ENCODE measurements at regions of chr6 and their contacts with region 1.

Region 1: DNA sequence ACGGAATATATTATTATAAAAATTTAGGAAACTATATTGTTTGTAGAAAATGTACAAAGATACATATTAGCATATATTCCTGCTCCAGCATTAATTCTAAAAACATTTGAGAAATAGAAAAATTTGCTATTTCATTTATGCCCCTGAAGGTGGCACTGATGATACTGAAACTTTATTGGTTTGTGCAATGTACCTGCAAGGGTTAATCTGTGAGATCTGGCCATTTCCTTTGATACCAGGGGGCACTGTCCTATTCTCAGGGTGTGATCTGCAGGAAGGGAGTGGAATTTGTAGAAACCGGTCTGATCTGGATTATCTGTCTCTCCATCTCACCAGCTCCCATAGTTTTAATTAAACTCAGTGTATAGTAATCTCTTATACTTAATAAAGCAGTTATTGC is 625.1 kb upstream of the IMPG1 start:
- DNase-seq: no peak
- H3K4me3 ChIP-seq: no peak overlapping the region
- H3K27ac ChIP-seq: no peak overlapping the region
- H3K4me1 ChIP-seq: no peaks in the 10 kb centered on the region
- H3K27me3 ChIP-seq: no peaks in the 10 kb centered on the region
- CTCF ChIP-seq: peak in 5 of 6 experiments; percentile 16 to 43 (median 26)
- POLR2A ChIP-seq: no peak

Region 2: GRCh38 chr6:76490456-76490855 is 207.1 kb before region 1 on chr6:
- intact Hi-C with region 1: no loop called
- DNase-seq: no peak
- H3K4me3 ChIP-seq: no peak overlapping the region
- H3K27ac ChIP-seq: no peak overlapping the region
- H3K4me1 ChIP-seq: no peaks in the 10 kb centered on the region
- H3K27me3 ChIP-seq: no peaks in the 10 kb centered on the region
- CTCF ChIP-seq: no peak
- POLR2A ChIP-seq: no peak

Region 3: GRCh38 chr6:76877238-76877553 is 179.6 kb after region 1 on chr6:
- intact Hi-C with region 1: loop called in 1 of 2 experiments (anchors 10 kb)
- DNase-seq: no peak
- H3K4me3 ChIP-seq: no peak overlapping the region
- H3K27ac ChIP-seq: no peak overlapping the region
- H3K4me1 ChIP-seq: no peaks in the 10 kb centered on the region
- H3K27me3 ChIP-seq: no peaks in the 10 kb centered on the region
- CTCF ChIP-seq: no peak
- POLR2A ChIP-seq: no peak

Region 4: GRCh38 chr6:76914737-76915136 is 217.2 kb after region 1 on chr6:
- intact Hi-C with region 1: no loop called
- DNase-seq: no peak
- H3K4me3 ChIP-seq: no peak overlapping the region
- H3K27ac ChIP-seq: no peak overlapping the region
- H3K4me1 ChIP-seq: no peaks in the 10 kb centered on the region
- H3K27me3 ChIP-seq: no peaks in the 10 kb centered on the region
- CTCF ChIP-seq: no peak
- POLR2A ChIP-seq: no peak

Region 5: GRCh38 chr6:77015350-77015749 is 317.8 kb after region 1 on chr6:
- intact Hi-C with region 1: no loop called
- DNase-seq: no peak
- H3K4me3 ChIP-seq: no peak overlapping the region
- H3K27ac ChIP-seq: no peak overlapping the region
- H3K4me1 ChIP-seq: no peaks in the 10 kb centered on the region
- H3K27me3 ChIP-seq: no peaks in the 10 kb centered on the region
- CTCF ChIP-seq: no peak
- POLR2A ChIP-seq: no peak